Ovary (tissue), 10 donors: ENCODE measurements at regions of chr20 and their contacts with region 1.

Region 1: GRCh38 chr20:8782804-8783203 is 286.1 kb upstream of the PLCB4 start:
- DNase-seq: no peak
- H3K4me3 ChIP-seq: no peak overlapping the region
- H3K27ac ChIP-seq: no peak overlapping the region
- H3K4me1 ChIP-seq: no peaks in the 10 kb centered on the region
- H3K27me3 ChIP-seq: no peaks in the 10 kb centered on the region
- CTCF ChIP-seq: no peak
- EP300 ChIP-seq: no peak
- POLR2A ChIP-seq: no peak

Region 2: GRCh38 chr20:9112541-9113515 is 330.0 kb after region 1 on chr20:
- intact Hi-C with region 1: no loop called
- DNase-seq: no peak
- H3K4me3 ChIP-seq: no peak overlapping the region
- H3K27ac ChIP-seq: no peak overlapping the region
- H3K4me1 ChIP-seq: peaks cover 2% of the 10 kb centered on the region
- H3K27me3 ChIP-seq: no peaks in the 10 kb centered on the region
- CTCF ChIP-seq: no peak
- EP300 ChIP-seq: no peak
- POLR2A ChIP-seq: no peak

Region 3: GRCh38 chr20:9359561-9360308 is 576.9 kb after region 1 on chr20:
- intact Hi-C with region 1: loop called in 1 of 4 experiments (anchors 10 kb)
- DNase-seq: peak in 2 of 5 donors; percentile 19 to 49
- H3K4me3 ChIP-seq: no peak overlapping the region
- H3K27ac ChIP-seq: no peak overlapping the region
- H3K4me1 ChIP-seq: no peaks in the 10 kb centered on the region
- H3K27me3 ChIP-seq: no peaks in the 10 kb centered on the region
- CTCF ChIP-seq: peak in 1 of 3 donors; percentile 34
- EP300 ChIP-seq: no peak
- POLR2A ChIP-seq: no peak